Activated B cell treated with CpG ODN at 0.5 μM for 24 hours (primary cell): ENCODE measurements at regions of chr4 and their contacts with region 1.

Region 1: GRCh38 chr4:53908661-53909078 is 155.7 kb downstream of the CHIC2 start:
- DNase-seq: no peak
- ATAC-seq: no peak
- H3K4me3 Mint-ChIP-seq: no peak overlapping the region
- H3K27ac Mint-ChIP-seq: no peak overlapping the region
- H3K4me1 Mint-ChIP-seq: peaks cover 13% of the 10 kb centered on the region
- H3K27me3 Mint-ChIP-seq: peaks cover 32% of the 10 kb centered on the region
- CTCF ChIP-seq: peak; percentile 36

Region 2: DNA sequence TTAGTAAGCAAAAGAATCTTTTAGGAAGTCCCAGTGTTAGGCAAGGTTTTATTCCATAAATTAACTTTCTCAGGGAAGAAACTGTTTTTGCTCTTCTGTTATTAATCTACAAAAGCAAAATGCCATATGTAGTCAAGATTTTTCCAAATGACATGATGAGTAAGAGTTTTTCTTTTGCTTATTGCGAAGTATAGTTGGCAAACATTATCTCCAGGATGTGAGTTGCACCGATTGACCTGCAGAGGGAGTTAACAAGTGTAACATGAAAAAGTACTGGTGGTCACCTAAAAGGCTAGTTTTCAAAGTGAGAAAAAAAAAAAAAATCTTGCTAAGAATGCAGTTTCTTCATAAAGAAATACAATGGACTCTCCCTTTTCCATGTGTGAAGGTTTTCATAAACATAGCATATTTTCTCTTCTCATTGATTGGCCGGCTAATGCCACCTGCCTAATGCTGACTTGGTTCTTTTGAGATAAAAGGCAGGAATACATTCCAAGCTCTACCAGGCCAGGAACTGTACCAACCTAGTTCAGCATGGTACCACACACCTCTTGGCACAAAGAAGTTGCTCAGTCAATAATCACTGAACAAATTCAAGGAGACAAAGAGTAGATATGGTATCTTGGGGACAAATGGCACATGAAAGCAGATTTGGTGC is 417.6 kb before region 1 on chr4:
- CTCF ChIA-PET with region 1: no interaction called
- POLR2A ChIA-PET with region 1: no interaction called
- intact Hi-C with region 1: loop called (anchors 10 kb)
- DNase-seq: no peak
- ATAC-seq: no peak
- H3K4me3 Mint-ChIP-seq: no peak overlapping the region
- H3K27ac Mint-ChIP-seq: no peak overlapping the region
- H3K4me1 Mint-ChIP-seq: no peaks in the 10 kb centered on the region
- H3K27me3 Mint-ChIP-seq: peaks cover 7% of the 10 kb centered on the region
- CTCF ChIP-seq: no peak

Region 3: DNA sequence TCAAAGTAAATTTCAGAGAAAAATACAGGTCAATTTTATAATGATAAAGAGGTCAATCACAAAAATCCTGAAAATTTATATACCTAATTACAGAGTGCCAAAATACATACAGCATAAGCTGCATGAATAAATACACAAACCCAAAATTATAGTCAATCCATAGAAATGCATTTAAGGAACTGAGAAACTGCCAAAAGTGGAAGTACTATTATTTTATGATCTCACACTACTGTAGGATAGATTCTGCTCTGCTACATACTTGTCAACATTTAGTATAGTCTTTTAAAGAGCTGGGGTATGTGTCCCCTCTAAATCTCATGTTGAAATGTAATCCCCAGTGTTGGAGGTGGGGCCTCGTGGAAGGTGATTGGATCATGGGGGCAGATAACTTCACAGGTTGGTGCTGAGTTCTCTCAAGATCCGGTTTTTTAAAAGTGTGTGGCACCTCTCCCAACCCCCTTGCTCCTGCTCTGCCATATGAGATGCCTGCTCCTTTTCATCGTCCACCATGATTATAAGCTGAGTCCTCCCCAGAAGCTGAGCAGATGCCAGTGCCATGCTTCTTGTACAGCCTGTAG is 124.0 kb after region 1 on chr4:
- CTCF ChIA-PET with region 1: no interaction called
- POLR2A ChIA-PET with region 1: no interaction called
- intact Hi-C with region 1: no loop called
- DNase-seq: no peak
- ATAC-seq: no peak
- H3K4me3 Mint-ChIP-seq: peak overlapping the region; percentile 64
- H3K27ac Mint-ChIP-seq: no peak overlapping the region
- H3K4me1 Mint-ChIP-seq: peaks cover 8% of the 10 kb centered on the region
- H3K27me3 Mint-ChIP-seq: no peaks in the 10 kb centered on the region
- CTCF ChIP-seq: no peak

Region 4: DNA sequence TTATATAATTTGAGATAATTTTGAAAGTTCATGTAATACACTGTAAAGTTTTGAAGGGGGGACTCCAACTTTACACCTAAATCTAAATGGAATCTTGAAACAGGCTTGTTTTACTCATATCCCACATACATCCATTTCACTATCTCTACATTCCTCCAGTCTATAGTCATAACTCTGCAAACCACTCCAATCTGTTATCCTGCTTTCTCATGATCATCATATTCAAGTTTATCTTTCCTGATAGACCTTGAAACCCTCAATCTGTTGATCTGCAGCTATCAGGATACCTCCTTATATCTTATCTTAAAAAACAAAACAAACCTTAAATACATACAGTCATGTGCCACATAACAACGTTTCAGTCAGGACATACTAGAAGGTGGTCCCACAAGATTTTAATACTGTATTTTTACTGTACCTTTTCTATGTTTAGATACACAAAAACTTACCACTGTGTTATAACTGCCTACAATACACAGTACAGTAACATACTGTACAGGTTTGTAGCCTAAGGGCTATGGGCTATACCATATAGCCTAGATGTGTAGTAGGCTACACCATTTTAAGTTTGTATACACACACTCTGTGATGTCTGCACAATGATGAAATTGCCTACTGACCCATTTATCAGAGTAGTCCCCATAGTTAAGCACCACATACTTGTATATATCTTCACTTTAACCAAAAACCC is 141.7 kb after region 1 on chr4:
- CTCF ChIA-PET with region 1: no interaction called
- POLR2A ChIA-PET with region 1: no interaction called
- intact Hi-C with region 1: no loop called
- DNase-seq: no peak
- ATAC-seq: no peak
- H3K4me3 Mint-ChIP-seq: no peak overlapping the region
- H3K27ac Mint-ChIP-seq: no peak overlapping the region
- H3K4me1 Mint-ChIP-seq: peaks cover 20% of the 10 kb centered on the region
- H3K27me3 Mint-ChIP-seq: no peaks in the 10 kb centered on the region
- CTCF ChIP-seq: no peak

Region 5: GRCh38 chr4:54099748-54100574 is 191.3 kb after region 1 on chr4 and contains the start of gene GSX2:
- CTCF ChIA-PET with region 1: no interaction called
- POLR2A ChIA-PET with region 1: no interaction called
- intact Hi-C with region 1: loop called (anchors 5 kb)
- DNase-seq: no peak
- ATAC-seq: peak; percentile 16
- H3K4me3 Mint-ChIP-seq: peak within 1 kb of the TSS; percentile 64
- H3K27ac Mint-ChIP-seq: no peak within 1 kb of the TSS
- H3K4me1 Mint-ChIP-seq: peaks cover 52% of the 10 kb centered on the region
- H3K27me3 Mint-ChIP-seq: peaks cover 77% of the 10 kb centered on the region
- CTCF ChIP-seq: no peak
- total RNA-seq, gene GSX2: not detected in 2 replicates

Region 6: GRCh38 chr4:54217642-54218495 is 309.2 kb after region 1 on chr4:
- CTCF ChIA-PET with region 1: interaction called, 9 read pairs
- POLR2A ChIA-PET with region 1: no interaction called
- intact Hi-C with region 1: loop called (anchors 1 kb)
- DNase-seq: peak; percentile 27
- ATAC-seq: peak; percentile 66
- H3K4me3 Mint-ChIP-seq: peak overlapping the region; percentile 16
- H3K27ac Mint-ChIP-seq: no peak overlapping the region
- H3K4me1 Mint-ChIP-seq: peaks cover 4% of the 10 kb centered on the region
- H3K27me3 Mint-ChIP-seq: peaks cover 23% of the 10 kb centered on the region
- CTCF ChIP-seq: no peak